ENCODE measurements at regions of chr2 and their contacts with region 1.

Region 1: GRCh38 chr2:10832203-10832936 is 19.8 kb upstream of the PDIA6 start:
- DNase-seq: peak; percentile 74
- H3K4me3 Mint-ChIP-seq: no peak overlapping the region
- H3K27ac Mint-ChIP-seq: no peak overlapping the region
- H3K4me1 Mint-ChIP-seq: peaks cover 6% of the 10 kb centered on the region
- H3K27me3 Mint-ChIP-seq: peaks cover 22% of the 10 kb centered on the region

Region 2: GRCh38 chr2:10812362-10813162 is 19.8 kb before region 1 on chr2 and contains the start of gene PDIA6:
- intact Hi-C with region 1: loop called (anchors 1 kb)
- DNase-seq: peak; percentile 95
- H3K4me3 Mint-ChIP-seq: peak within 1 kb of the TSS; percentile 92
- H3K27ac Mint-ChIP-seq: peak within 1 kb of the TSS; percentile 91
- H3K4me1 Mint-ChIP-seq: peaks cover 31% of the 10 kb centered on the region
- H3K27me3 Mint-ChIP-seq: peaks cover 13% of the 10 kb centered on the region
- total RNA-seq, gene PDIA6: 171 and 173 TPM in 2 replicates

Region 3: GRCh38 chr2:11124503-11125068 is 292.2 kb after region 1 on chr2:
- intact Hi-C with region 1: loop called (anchors 1 kb)
- DNase-seq: peak; percentile 24
- H3K4me3 Mint-ChIP-seq: no peak overlapping the region
- H3K27ac Mint-ChIP-seq: no peak overlapping the region
- H3K4me1 Mint-ChIP-seq: peaks cover 5% of the 10 kb centered on the region
- H3K27me3 Mint-ChIP-seq: peaks cover 9% of the 10 kb centered on the region

Region 4: DNA sequence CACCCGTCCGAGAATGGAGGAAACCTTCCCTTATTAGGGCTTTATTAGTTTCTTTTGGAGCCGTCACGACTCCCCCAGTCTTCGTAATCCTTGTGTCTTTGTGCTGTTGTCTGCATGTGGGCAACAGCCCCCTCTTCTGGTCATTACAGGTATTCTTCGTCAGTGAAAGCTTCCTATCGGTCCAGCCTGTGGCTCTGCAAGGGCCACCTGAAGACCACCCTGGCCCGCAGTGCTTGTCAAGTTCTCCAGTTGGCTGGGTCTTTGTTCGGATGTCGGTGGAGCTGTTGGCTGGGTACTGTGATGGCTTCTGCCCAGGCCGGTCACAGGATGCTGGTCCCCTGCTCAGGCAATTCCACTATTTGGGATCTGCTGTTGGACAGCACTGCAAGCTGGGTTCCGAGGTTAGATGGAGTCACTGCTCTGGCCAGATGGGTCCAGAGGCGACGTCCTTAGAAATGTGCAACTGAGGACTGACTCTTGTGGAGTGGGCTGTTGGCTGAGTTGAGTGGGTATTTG is 614.4 kb after region 1 on chr2:
- intact Hi-C with region 1: loop called (anchors 2 kb)
- DNase-seq: no peak
- H3K4me3 Mint-ChIP-seq: no peak overlapping the region
- H3K27ac Mint-ChIP-seq: no peak overlapping the region
- H3K4me1 Mint-ChIP-seq: no peaks in the 10 kb centered on the region
- H3K27me3 Mint-ChIP-seq: no peaks in the 10 kb centered on the region

Region 5: DNA sequence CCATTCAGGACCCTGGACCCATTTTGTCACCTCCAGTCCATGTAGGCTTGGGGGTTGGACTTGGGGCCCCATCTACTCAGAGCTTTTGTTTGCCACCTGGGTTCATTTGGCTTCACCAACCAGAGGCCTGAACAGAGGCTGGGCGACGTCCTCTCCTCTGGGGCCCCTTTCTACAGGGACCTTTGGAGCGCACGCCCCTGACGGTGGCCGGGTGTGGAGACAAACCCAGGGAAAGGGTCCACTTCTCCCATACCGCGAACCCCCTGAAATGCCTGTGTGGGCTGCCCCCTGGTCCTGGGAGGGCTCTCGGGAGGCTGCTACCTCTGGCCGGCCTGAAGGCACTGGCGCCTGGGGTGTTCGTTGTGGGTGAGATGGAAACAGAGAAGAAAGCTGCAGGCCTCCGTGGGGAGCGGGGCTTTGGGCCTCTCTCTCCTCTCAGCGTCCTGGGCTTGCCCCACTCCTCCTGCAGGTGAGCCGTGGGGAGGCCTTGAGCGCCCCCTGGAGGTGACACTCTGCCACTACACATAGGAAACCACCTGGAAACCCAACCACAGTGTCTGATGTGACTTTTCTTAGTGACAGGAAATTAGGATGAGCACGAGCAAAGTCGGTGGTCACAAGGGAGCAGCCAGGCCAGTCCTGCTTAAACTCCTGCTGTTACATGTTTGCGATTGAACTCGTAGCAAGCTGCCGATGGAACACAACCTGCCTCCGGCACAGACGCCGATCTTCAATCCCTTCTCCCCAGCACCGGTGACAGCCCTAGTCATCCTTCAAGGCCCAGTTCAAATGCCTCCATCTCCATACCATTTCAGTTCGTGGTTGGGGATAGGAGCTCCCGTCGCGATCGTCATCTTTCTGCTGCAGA is 849.6 kb after region 1 on chr2:
- intact Hi-C with region 1: loop called (anchors 1 kb)
- DNase-seq: peak; percentile 42
- H3K4me3 Mint-ChIP-seq: no peak overlapping the region
- H3K27ac Mint-ChIP-seq: no peak overlapping the region
- H3K4me1 Mint-ChIP-seq: no peaks in the 10 kb centered on the region
- H3K27me3 Mint-ChIP-seq: peaks cover 53% of the 10 kb centered on the region

Measured in activated T-helper 1 cell treated with anti-CD3 and anti-CD28 coated beads, Interleukin-12 subunit alpha, Interleukin-12 subunit beta, Interleukin-2, Interleukin-4 antibody, amounts not matched to agents 30 ng/mL and 10 ng/mL and 1 ng/mL, durations not matched to agents 14 hours and 24 hours and 36 hours (primary cell).